ENCODE measurements at regions of chr16 and their contacts with region 1.

Region 1: DNA sequence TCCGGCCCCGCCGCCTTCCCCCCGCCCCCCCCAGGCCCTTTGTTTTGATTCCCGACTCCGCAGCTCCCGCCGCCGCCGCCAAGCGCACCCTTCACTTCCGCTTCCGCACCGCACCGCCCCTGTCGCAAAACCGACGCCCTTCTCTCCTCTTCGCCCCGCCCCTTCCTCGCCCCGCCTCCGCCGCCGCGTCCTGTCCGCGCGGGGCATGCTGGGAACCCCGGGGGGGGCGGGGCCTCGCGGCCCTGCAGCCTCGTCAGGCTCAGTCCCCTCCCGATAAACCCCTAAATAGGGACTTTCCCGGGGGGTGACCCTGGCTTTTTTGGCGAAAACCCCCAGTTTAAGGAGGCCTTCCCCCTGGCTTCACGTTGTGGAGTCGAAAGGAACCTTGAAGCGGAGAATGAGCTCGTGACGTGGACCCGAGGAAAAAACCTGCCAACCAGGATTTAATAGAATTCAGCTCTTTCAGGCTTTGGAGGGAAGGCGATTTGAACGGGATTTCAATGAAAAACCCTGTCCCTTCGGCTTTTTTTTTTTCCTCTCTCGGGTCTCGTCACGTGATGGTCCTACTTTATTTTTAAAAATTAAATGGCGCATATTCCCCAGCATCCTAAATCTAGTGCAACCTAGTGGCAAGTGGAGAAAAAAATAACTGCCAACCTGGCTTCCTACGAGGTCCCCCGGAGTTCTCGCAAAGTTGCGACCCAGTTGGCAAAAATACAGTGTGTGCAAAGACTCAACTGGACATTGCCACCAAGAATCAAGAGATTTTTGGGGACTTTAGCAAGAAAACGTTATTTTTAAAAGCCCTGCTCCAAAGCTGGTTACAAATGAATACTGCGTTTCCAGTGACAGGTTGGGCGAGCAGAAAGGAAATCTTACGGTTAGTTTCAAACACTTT is at the start of gene MARF1:
- DNase-seq: peak; percentile 97 to 100 (median 99)
- ATAC-seq: peak; percentile 66 to 77
- H3K4me3 Mint-ChIP-seq: peak within 1 kb of the TSS; percentile 90 to 98 (median 93)
- H3K27ac Mint-ChIP-seq: peak within 1 kb of the TSS; percentile 95 to 99 (median 98)
- H3K4me1 Mint-ChIP-seq: peaks cover 26 to 55% (median 44%) of the 10 kb centered on the region in 4 donors
- H3K27me3 Mint-ChIP-seq: no peaks in the 10 kb centered on the region
- polyA plus RNA-seq, gene MARF1: 10.9 to 18.2 (median 15.2) TPM

Region 2: GRCh38 chr16:15572329-15573001 is 70.8 kb before region 1 on chr16:
- POLR2A ChIA-PET with region 1: no interaction called
- DNase-seq: no peak
- ATAC-seq: no peak
- H3K4me3 Mint-ChIP-seq: no peak overlapping the region
- H3K27ac Mint-ChIP-seq: peak overlapping the region in 1 of 10 donors; percentile 68
- H3K4me1 Mint-ChIP-seq: peaks cover 0 to 16% (median 4%) of the 10 kb centered on the region in 4 donors
- H3K27me3 Mint-ChIP-seq: no peaks in the 10 kb centered on the region

Region 3: DNA sequence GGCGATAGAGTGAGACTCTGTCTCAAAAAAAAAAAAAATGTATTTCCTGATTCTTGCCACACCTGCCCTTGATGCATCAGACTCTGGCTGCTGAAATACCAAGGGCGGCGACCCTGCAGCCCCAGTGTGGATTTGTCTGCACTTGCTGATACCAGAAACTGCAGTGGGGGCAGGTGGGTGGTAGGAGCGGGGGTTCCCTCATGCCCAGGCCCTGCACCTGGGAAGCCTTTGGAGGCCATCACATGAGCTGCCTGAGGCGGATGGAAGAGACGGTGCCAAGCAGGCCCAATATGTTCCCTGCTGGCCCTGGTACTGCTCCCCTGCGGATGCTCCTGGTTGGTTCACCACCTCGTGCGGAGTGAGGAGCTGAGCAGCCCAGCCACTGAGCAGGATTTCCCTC is 51.0 kb before region 1 on chr16:
- POLR2A ChIA-PET with region 1: interaction called, 17 read pairs
- DNase-seq: peak in 1 of 10 donors; percentile 36
- ATAC-seq: no peak
- H3K4me3 Mint-ChIP-seq: peak overlapping the region in 4 of 10 donors; percentile 7 to 36 (median 19)
- H3K27ac Mint-ChIP-seq: peak overlapping the region in 9 of 10 donors; percentile 53 to 96 (median 82)
- H3K4me1 Mint-ChIP-seq: peaks cover 8 to 67% (median 29%) of the 10 kb centered on the region in 4 donors
- H3K27me3 Mint-ChIP-seq: no peaks in the 10 kb centered on the region

Region 4: GRCh38 chr16:15621889-15622288 is 21.4 kb before region 1 on chr16:
- POLR2A ChIA-PET with region 1: interaction called, 10 read pairs
- DNase-seq: no peak
- ATAC-seq: no peak
- H3K4me3 Mint-ChIP-seq: no peak overlapping the region
- H3K27ac Mint-ChIP-seq: peak overlapping the region in 8 of 10 donors; percentile 23 to 83 (median 76)
- H3K4me1 Mint-ChIP-seq: peaks cover 0 to 13% (median 5%) of the 10 kb centered on the region in 4 donors
- H3K27me3 Mint-ChIP-seq: no peaks in the 10 kb centered on the region

Region 5: DNA sequence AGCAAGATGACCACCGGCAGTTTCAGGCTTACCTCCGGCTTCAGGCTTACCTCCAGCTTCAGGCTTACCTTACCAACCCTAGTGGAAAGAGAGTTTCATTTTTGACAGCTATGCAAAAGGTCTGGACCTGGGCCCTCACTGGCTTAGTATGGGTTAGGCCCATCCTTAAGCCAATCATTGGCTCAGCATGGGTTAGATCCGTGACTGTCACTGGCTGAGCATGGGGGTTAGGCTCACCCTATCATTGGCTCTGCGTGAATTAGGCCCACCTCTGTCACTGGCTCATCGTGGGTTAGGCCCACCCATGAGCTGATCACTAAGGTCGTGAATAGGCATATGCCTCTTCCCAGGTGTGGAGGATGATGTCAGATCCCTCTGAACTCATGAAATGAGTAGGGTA is 14.9 kb after region 1 on chr16:
- POLR2A ChIA-PET with region 1: interaction called, 59 read pairs
- DNase-seq: no peak
- ATAC-seq: peak in 1 of 2 donors; percentile 25
- H3K4me3 Mint-ChIP-seq: peak overlapping the region in 4 of 10 donors; percentile 10 to 66 (median 46)
- H3K27ac Mint-ChIP-seq: peak overlapping the region; percentile 81 to 97 (median 94)
- H3K4me1 Mint-ChIP-seq: peaks cover 28 to 83% (median 71%) of the 10 kb centered on the region in 4 donors
- H3K27me3 Mint-ChIP-seq: no peaks in the 10 kb centered on the region

Region 6: GRCh38 chr16:15672514-15673167 is 29.3 kb after region 1 on chr16:
- POLR2A ChIA-PET with region 1: interaction called, 56 read pairs
- DNase-seq: peak; percentile 50 to 94 (median 83)
- ATAC-seq: peak; percentile 90 to 96
- H3K4me3 Mint-ChIP-seq: peak overlapping the region; percentile 58 to 86 (median 75)
- H3K27ac Mint-ChIP-seq: peak overlapping the region; percentile 89 to 99 (median 98)
- H3K4me1 Mint-ChIP-seq: peaks cover 31 to 59% (median 46%) of the 10 kb centered on the region in 4 donors
- H3K27me3 Mint-ChIP-seq: no peaks in the 10 kb centered on the region

Region 7: GRCh38 chr16:15811481-15812400 is 168.4 kb after region 1 on chr16:
- POLR2A ChIA-PET with region 1: no interaction called
- DNase-seq: no peak
- ATAC-seq: no peak
- H3K4me3 Mint-ChIP-seq: no peak overlapping the region
- H3K27ac Mint-ChIP-seq: no peak overlapping the region
- H3K4me1 Mint-ChIP-seq: no peaks in the 10 kb centered on the region
- H3K27me3 Mint-ChIP-seq: peaks cover 8 to 28% (median 12%) of the 10 kb centered on the region in 5 donors